Dorsolateral prefrontal cortex (tissue), 120 donors: ENCODE measurements at regions of chr19 and their contacts with region 1.

Region 1: DNA sequence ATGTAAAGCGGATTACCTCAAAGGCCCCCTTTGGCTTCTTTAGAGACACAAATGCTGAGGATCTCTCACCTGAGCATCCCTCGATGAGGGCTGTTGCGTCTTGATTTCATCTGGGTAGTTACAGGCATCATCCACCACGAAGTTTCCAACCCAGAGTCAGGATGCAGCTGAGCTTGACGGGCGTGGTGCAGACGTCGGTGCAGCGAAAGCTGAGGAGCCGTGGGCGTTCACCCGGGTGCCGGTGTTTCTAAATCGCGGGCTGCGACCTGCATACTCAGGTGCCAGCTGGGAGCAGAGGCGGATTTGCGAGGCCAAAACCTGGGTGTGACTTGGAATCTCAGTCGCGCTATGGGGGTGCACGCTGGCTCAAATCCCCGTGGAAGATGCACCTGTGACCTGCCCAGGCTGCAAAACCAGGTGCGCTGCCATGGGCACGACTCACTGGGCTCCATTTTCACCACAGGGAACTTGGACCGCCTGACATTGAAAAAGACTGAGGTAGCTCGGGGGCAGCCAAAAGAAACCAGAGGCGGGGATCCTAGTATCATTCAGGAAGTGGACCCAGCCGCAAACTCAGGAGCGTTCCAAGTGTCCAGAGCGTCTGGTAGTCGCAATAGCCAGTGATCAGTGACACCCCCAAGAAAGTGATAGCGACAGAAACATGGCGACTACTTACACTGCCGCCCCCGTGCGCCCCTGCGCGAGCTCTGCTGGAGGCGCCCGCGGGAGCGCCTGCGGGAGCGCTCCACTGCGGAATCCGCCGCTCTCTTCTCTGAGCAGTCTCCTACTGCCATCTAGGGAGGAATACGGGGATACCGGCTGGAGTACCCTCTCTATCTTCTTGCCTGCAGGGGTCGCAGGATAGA is 36.4 kb upstream of the IGFL4 start:
- DNase-seq: peak; percentile 23 to 87 (median 82)
- H3K4me3 ChIP-seq: peak overlapping the region; percentile 45 to 84 (median 68)
- H3K27ac ChIP-seq: peak overlapping the region in 43 of 59 donors; percentile 4 to 89 (median 67)
- H3K27me3 ChIP-seq: peaks cover 0 to 8% (median 0%) of the 10 kb centered on the region in 45 donors
- CTCF ChIP-seq: peak; percentile 68 to 100 (median 97)

Region 2: GRCh38 chr19:45817010-45817724 is 260.0 kb before region 1 on chr19:
- intact Hi-C with region 1: loop called in 1 of 2 experiments (anchors 2 kb)
- DNase-seq: peak; percentile 60 to 90 (median 80)
- H3K4me3 ChIP-seq: no peak overlapping the region
- H3K27ac ChIP-seq: peak overlapping the region in 3 of 59 donors; percentile 13 to 44 (median 18)
- H3K27me3 ChIP-seq: no peaks in the 10 kb centered on the region
- CTCF ChIP-seq: peak; percentile 80 to 98 (median 93)

Region 3: DNA sequence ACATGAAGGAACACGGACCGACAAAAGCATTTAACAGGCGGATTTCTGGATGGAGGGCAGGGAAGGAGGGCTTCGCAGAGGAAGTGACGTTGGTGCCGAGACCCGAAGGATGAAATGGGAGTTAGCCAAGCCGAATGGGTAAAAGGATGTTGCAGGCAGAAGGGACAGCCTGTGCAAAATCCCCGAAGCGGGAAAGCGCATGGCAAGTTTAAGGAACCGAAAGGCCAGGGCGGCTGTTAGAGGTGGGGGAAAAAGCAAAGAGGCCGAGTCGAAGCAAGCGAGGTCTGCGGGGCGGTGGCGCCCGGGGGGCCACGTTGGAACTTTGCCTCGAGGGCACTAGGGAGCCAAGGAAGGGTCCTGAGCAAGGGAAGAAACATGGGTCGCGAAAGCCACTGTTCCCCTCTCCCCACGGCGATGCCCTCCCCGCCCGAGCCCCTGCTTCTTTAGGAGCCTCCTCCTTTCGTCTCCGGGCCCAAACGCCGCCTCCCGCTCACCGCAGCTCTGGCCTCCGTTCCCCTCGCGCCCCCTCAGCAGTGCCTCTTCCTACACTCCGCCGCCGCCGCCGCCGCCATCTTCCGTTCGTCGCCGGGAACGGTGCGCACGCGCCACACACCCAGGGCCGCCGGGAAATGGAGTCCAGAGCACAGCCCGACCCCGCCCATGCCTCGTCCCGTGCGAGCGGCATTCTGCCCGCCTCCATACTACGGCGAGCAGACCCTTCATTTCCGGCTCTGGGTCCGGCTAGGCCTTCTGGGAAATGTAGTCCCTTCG is 214.4 kb before region 1 on chr19 and contains the start of gene SYMPK:
- intact Hi-C with region 1: loop called in 1 of 2 experiments (anchors 1 kb)
- DNase-seq: peak; percentile 97 to 99 (median 99)
- H3K4me3 ChIP-seq: peak within 1 kb of the TSS; percentile 73 to 99 (median 93)
- H3K27ac ChIP-seq: peak within 1 kb of the TSS; percentile 53 to 97 (median 91)
- H3K27me3 ChIP-seq: peaks cover 0 to 26% (median 15%) of the 10 kb centered on the region in 45 donors
- CTCF ChIP-seq: peak in 39 of 56 donors; percentile 7 to 60 (median 34)
- total RNA-seq, gene SYMPK: 65.0 to 119 (median 87.1) TPM

Region 4: DNA sequence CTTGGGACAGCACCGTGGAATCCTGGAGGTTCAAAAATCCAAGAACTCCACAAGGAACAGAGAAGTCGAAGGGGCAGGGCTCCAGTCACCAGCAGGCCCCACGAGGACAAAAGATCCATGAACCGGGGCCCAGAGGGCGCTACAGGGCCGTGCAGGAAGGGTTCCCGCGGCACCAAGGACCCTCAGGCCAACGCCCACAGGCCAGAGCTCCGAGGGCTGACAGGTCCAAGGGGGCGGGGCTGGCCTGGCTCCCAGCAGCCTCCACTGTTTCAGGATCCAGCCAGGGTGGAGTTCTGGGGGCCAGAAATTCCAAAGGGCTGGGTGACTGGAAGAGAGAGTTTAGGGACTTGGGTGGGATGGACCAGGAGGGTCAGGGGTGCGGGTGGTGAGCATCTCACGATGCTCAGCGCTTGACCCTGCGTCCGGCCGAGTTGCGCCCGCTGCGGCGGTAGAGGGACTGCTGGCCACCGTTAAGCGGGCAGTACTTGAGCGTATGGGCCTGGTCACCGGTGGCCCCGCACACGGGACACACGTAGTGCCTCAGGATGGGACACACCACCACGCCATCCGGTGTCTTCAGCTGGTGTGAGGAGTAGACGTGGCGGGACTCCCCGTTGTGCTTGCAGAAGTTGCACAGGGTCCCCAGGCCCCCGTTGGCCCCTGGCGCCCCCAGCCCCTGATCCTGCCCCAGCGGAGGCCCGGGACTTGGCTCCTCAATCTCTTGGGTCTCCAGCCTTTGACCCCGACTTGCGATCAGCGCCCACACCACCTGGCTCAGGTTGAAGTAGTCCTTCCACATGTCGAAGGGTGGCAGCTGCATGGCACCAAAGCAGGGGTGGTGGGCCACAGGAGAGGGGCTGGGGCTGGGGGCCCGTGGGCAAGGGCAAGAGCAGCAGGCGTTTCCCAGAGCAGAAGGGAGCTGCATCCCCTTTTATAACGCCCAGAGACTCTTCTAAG is 163.0 kb before region 1 on chr19 and contains the start of gene NANOS2:
- intact Hi-C with region 1: no loop called
- DNase-seq: no peak
- H3K4me3 ChIP-seq: no peak within 1 kb of the TSS
- H3K27ac ChIP-seq: no peak within 1 kb of the TSS
- H3K27me3 ChIP-seq: peaks cover 0 to 4% (median 0%) of the 10 kb centered on the region in 45 donors
- CTCF ChIP-seq: peak in 32 of 56 donors; percentile 6 to 47 (median 28)
- total RNA-seq, gene NANOS2: 0.28 to 1.7 (median 0.49) TPM in 16 of 120 experiments, not detected in the others

Region 5: DNA sequence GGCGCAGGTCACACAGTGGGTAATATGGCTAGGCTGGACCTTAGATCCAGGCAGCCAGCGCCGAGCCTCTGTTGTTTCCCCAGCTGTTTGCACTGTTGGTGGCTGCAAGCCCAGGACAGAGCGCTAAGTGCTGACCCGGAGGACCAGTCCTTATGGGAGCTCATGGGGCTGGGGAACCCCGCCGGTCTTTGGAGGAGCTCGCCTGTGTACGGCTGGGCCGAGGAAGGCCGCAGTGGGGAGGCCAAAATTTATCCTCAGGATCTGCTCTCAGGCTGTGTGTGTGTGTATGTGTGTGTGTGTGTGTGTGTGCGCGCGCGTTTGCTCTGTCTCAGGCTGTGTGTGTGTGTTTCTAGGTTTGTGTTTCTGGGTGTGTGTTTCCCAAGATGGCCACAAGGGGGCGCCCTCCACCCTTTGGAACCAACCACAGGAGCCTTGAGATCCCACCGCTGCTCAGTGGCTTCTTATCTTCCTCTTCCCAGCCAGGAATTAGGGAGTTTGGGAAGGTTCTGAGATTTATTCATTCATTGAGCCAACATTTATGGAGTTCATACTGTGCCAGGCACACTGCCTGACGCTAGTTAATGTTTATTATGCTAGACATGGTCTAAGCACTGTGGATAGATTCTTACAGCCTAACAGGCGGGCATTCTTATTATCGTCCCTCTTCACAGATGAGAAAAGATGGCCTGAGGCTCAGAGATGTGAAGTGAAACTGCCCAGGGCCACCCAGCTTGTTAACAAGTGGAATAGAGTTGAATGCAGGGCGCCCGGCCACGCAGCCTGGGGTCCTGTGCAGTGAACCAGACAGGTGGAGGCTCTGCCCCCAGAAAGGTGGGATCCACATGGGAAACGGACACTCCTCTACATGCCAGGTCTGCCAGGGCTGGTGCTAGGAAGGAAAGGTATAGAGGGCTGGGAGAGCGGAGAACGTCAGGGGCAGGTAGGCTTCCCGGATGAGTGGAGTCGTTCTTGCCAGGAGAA is 67.4 kb before region 1 on chr19:
- intact Hi-C with region 1: no loop called
- DNase-seq: peak; percentile 73 to 91 (median 84)
- H3K4me3 ChIP-seq: peak overlapping the region in 11 of 59 donors; percentile 0 to 47 (median 21)
- H3K27ac ChIP-seq: peak overlapping the region in 40 of 59 donors; percentile 5 to 84 (median 48)
- H3K27me3 ChIP-seq: peaks cover 0 to 5% (median 0%) of the 10 kb centered on the region in 45 donors
- CTCF ChIP-seq: peak; percentile 69 to 96 (median 86)

Region 6: DNA sequence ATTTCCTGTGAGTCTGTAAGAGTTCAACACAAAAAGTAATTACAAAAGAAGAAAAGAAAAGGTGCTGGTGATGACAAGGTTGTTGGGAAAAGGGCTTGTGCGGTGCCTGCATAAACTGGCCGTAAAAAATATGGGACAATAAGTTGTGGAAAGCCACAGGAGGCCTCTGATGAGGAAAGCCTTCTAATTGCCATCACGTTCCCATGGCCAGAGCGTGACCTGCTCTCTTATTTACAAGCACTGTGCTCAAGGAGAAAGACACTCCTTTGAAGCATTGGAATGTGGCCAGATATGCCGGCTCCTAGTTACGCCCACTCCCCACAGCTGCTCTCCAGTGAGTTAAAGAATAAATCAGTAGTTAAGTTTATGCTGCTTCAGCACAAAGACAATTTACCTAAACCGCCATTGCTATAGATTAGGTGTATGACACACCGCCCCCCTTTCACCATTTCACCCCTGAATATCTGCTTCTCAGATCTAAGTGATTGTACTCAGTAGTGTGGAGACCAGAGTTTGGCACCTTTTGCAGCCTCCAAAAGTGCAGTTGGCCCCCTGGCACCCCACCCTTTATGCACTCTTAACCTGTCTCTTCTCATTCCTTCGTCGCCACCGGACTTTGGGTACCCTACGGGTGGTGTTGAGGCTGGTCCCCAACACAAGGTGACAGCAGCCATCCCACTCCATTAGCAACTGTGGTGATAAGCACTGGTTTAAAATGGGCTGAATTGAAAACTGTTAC is 46.2 kb before region 1 on chr19:
- intact Hi-C with region 1: loop called (anchors 2 kb)
- DNase-seq: no peak
- H3K4me3 ChIP-seq: no peak overlapping the region
- H3K27ac ChIP-seq: no peak overlapping the region
- H3K27me3 ChIP-seq: peaks cover 0 to 2% (median 0%) of the 10 kb centered on the region in 45 donors
- CTCF ChIP-seq: no peak

Region 7: GRCh38 chr19:46056536-46056935 is 20.6 kb before region 1 on chr19:
- intact Hi-C with region 1: no loop called
- DNase-seq: no peak
- H3K4me3 ChIP-seq: no peak overlapping the region
- H3K27ac ChIP-seq: no peak overlapping the region
- H3K27me3 ChIP-seq: no peaks in the 10 kb centered on the region
- CTCF ChIP-seq: no peak

Region 8: GRCh38 chr19:46191972-46192371 is 114.8 kb after region 1 on chr19:
- intact Hi-C with region 1: loop called (anchors 2 kb)
- DNase-seq: no peak
- H3K4me3 ChIP-seq: no peak overlapping the region
- H3K27ac ChIP-seq: no peak overlapping the region
- H3K27me3 ChIP-seq: peaks cover 0 to 4% (median 0%) of the 10 kb centered on the region in 45 donors
- CTCF ChIP-seq: no peak

Region 9: DNA sequence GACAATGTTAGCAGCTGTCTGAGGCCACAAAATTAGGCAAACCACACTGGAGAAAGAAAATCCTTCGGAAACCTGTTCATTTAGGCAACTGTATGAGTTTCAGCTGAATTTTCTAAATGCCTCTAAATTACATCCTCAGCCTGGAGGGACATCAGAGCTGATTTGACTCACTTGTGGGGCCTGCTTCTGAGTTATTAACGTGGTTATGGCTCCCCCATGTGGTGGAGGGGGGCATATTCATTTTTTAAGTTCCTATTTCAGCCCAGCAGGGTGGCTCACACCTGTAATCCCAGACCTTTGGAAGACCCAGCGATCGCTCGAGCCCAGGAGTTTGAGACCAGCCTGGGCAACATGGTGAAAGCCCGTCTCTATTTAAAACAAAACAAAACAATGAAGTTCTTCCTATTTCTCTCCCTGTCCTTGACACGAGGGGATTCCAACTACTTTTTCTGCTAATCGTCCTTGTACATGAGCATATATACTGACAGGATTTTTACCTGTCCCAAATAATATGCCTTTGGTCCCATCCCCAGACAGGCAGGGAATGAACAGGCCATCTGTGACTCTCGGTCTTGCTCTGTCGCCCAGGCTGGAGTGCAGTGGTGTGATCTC is 188.1 kb after region 1 on chr19:
- intact Hi-C with region 1: loop called (anchors 1 to 2 kb)
- DNase-seq: peak in 9 of 10 donors; percentile 39 to 75 (median 58)
- H3K4me3 ChIP-seq: no peak overlapping the region
- H3K27ac ChIP-seq: no peak overlapping the region
- H3K27me3 ChIP-seq: peaks cover 0 to 7% (median 0%) of the 10 kb centered on the region in 45 donors
- CTCF ChIP-seq: peak; percentile 78 to 98 (median 91)

Region 10: DNA sequence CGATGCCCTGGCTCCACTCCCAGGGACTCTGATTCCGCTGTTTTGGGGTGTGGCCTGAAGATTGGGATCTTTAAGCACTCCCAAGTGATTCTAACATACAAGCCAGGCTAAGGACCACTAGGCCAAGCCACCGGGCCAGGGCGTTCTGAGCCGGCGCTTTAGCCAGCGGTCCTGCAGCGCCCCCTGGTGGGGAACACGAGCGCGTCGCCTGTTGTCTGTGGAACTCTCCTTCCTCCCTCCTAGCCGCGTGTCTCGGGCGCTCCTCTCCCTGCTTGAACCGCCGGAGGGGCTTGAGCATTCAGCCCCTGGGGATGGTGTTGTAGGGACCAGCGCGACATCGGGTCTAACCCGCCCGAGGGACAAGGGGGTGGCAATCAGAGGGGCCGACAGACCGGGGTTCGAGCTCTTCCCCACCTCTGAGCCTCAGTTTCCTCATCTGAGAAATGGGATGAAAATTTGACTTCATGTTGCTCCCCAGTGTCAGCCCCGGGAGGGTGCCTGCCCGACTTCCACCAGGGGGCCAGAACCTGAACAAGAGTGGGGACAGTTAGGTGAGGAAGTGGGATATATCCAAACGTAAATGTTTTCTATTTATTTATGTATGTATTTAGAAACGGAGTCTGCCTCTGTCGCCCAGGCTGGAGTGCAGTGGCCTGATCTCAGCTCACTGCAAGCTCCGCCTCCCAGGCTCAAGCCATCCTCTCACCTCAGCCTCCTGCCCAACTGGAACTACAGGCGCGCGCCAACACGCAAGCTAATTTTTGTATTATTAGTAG is 436.5 kb after region 1 on chr19:
- intact Hi-C with region 1: loop called in 1 of 2 experiments (anchors 10 kb)
- DNase-seq: peak; percentile 60 to 90 (median 77)
- H3K4me3 ChIP-seq: peak overlapping the region in 1 of 59 donors; percentile 11
- H3K27ac ChIP-seq: peak overlapping the region in 1 of 59 donors; percentile 28
- H3K27me3 ChIP-seq: no peaks in the 10 kb centered on the region
- CTCF ChIP-seq: peak; percentile 45 to 100 (median 98)